Right cardiac atrium (tissue), 5 donors: ENCODE measurements at regions of chr4 and their contacts with region 1.

Region 1: DNA sequence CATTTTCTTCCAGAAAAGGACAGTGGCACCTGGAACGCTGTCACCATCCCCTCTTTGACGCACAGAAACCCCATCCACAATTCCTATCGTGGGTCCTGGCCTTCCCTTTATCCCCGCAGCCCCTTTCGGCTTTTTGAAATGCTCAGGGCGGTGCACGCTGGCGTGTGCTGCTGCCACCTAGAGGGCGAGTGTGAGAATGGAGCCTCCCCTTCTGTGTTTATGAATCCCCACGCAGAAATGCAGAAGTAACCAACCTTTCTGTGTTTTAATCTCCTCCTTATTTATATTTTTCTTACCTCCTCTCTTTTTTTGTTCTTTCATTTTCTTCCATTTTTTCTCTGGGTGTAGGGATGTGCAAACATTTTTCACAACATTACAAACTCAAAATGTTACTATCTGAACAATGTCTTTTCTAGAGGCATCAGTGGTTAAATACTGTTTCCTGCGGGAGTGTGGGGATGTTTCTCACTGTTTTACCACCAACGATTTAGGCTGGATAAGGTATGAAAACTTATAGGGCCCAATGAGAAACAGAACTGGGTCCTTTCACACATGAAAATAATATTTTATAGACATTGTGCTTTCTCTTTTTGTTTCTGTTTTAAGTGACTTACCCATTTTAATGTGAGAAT is 50.0 kb downstream of the TMA16 start:
- DNase-seq: peak; percentile 54 to 79 (median 79)
- ATAC-seq: peak; percentile 84 to 88
- H3K4me3 ChIP-seq: peak overlapping the region; percentile 35
- H3K27ac ChIP-seq: no peak overlapping the region
- H3K4me1 ChIP-seq: no peaks in the 10 kb centered on the region
- H3K27me3 ChIP-seq: no peaks in the 10 kb centered on the region

Region 2: GRCh38 chr4:162497564-162498167 is 1046.9 kb before region 1 on chr4:
- intact Hi-C with region 1: loop called in 3 of 4 experiments (anchors 5 to 10 kb)
- DNase-seq: no peak
- ATAC-seq: peak; percentile 70 to 76
- H3K4me3 ChIP-seq: no peak overlapping the region
- H3K27ac ChIP-seq: no peak overlapping the region
- H3K4me1 ChIP-seq: no peaks in the 10 kb centered on the region
- H3K27me3 ChIP-seq: no peaks in the 10 kb centered on the region

Region 3: GRCh38 chr4:162874048-162874447 is 670.5 kb before region 1 on chr4:
- intact Hi-C with region 1: no loop called
- DNase-seq: no peak
- ATAC-seq: no peak
- H3K4me3 ChIP-seq: no peak overlapping the region
- H3K27ac ChIP-seq: no peak overlapping the region
- H3K4me1 ChIP-seq: no peaks in the 10 kb centered on the region
- H3K27me3 ChIP-seq: no peaks in the 10 kb centered on the region

Region 4: GRCh38 chr4:163484906-163485305 is 59.6 kb before region 1 on chr4:
- intact Hi-C with region 1: loop called (anchors 5 to 10 kb)
- DNase-seq: peak; percentile 32 to 56 (median 53)
- ATAC-seq: peak in 1 of 2 donors; percentile 47
- H3K4me3 ChIP-seq: no peak overlapping the region
- H3K27ac ChIP-seq: no peak overlapping the region
- H3K4me1 ChIP-seq: no peaks in the 10 kb centered on the region
- H3K27me3 ChIP-seq: no peaks in the 10 kb centered on the region

Region 5: DNA sequence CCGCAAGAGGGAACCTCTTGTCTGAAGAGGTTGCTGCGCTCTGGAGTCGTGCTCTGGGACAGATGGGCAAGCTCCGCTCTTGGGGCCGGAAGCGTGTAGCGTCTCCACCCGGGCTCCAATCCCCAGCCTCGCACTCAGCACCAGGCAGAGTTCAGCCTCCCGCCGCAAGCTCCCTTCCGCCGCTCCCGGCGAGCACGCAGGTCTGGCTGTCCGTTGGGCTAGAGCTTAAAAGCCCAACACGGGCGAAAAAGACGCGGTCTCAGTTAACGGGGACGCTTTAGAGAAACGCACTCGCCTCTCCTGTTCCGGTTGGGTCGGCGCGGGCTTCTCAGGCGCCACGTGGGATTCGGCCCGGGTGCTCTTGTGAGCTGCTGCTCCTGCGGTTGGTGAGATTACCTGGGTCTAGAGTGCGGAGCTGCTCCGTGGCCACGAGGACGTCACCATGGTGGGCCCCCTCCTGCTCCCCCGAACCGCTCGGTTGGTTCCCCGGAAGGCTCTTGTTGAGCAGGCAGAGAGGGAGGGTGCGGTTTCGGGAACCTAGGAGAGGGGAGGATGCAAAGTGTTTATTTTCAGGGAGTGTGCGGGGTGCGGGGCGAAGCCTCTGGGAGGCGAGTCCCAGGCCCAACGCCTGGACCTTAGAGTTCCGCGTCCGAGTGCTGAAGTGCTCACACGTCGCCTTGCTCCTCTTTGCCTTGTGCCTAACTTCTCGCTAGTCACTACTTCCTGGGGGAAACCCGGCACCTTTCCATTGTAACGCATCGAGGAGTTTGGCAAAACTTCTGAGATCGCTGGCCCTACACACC is 50.0 kb before region 1 on chr4 and contains the start of gene TMA16:
- intact Hi-C with region 1: loop called (anchors 5 to 10 kb)
- DNase-seq: peak; percentile 90 to 95 (median 94)
- ATAC-seq: peak; percentile 98 to 99
- H3K4me3 ChIP-seq: peak within 1 kb of the TSS; percentile 82
- H3K27ac ChIP-seq: peak within 1 kb of the TSS; percentile 78
- H3K4me1 ChIP-seq: no peaks in the 10 kb centered on the region
- H3K27me3 ChIP-seq: no peaks in the 10 kb centered on the region
- total RNA-seq, gene TMA16: 11.9 to 12.8 (median 12.5) TPM

Region 6: DNA sequence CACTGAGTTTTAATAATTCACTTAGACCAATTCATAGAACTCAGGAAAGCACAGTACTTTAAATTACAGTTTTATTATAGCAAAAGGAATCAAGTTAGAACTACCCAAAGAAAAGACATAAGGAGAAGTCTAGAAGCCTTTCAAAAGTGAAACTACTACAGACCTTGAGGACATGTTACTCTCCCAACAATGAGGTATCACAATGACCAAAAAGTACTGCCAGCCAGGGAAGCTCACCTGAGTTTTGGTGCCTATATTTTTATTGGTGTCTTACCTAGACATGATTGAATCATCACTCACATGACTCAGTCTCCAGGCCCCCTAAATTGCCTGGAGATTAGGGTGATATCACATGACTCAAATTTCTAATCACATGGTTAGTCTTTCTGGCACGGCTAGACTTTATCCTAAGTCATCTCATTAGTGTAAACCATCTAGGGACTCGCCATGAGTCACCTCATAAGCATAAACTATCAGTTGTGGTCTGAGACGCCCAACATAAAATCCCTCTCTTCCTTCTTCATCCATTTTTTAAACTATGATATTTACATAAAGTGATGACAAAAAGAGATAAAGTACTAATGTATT is 322.3 kb after region 1 on chr4:
- intact Hi-C with region 1: no loop called
- DNase-seq: no peak
- ATAC-seq: no peak
- H3K4me3 ChIP-seq: no peak overlapping the region
- H3K27ac ChIP-seq: no peak overlapping the region
- H3K4me1 ChIP-seq: no peaks in the 10 kb centered on the region
- H3K27me3 ChIP-seq: no peaks in the 10 kb centered on the region